ENCODE measurements at regions of chr2 and their contacts with region 1.

Region 1: GRCh38 chr2:144320491-144320890 is 199.4 kb downstream of the ZEB2 start:
- DNase-seq: peak; percentile 22
- H3K4me3 Mint-ChIP-seq: peak overlapping the region; percentile 51
- H3K27ac Mint-ChIP-seq: peak overlapping the region; percentile 78
- H3K4me1 Mint-ChIP-seq: peaks cover 62% of the 10 kb centered on the region
- H3K27me3 Mint-ChIP-seq: no peaks in the 10 kb centered on the region

Region 2: DNA sequence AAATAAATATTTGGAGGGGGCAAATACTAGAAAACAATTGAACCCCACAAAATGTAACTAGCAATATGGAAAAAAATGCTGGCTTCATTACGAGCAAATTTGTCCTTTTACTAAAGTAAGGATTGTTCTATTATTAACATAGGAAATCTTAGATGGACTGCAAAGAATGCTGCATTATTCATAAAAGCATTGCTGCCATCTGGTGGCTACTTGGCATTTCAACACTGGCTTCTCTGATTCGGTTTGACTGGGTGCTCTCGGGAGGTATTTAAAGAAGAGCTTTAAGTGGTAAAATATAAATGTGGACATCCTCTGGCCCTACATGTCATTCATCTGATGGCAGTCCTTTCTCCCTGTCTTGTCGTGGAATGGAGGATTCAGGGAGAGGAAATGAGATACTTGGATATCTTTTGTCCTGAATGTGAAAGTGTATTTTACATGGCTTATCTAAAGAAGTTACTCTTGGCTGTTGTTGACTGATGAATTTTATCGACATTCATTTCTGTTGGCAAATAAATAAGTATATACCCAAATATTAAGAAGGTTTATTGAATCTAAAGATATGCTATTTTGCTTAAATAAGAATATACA is 1061.0 kb before region 1 on chr2:
- intact Hi-C with region 1: loop called (anchors 10 kb)
- DNase-seq: peak; percentile 54
- H3K4me3 Mint-ChIP-seq: peak overlapping the region; percentile 63
- H3K27ac Mint-ChIP-seq: peak overlapping the region; percentile 92
- H3K4me1 Mint-ChIP-seq: peaks cover 73% of the 10 kb centered on the region
- H3K27me3 Mint-ChIP-seq: no peaks in the 10 kb centered on the region

Region 3: DNA sequence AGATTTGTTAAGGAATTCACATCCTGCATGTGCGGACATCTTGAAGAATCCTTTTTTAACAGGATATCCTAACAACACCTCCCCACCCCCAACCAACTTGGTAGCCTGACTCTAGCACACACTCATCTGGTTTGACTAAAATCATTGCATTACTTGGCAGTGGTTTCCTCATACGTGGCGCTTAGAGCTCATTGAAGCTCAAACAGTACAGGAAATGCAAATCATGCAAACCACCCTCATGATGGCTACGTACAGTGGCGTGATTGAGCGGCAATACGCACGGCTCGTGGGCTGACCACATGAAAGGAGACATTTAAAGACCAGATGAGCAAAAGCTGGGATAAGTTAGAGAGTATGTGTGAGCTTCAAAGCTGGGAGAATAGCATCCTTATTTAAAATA is 136.8 kb before region 1 on chr2:
- intact Hi-C with region 1: loop called (anchors 1 kb)
- DNase-seq: peak; percentile 76
- H3K4me3 Mint-ChIP-seq: peak overlapping the region; percentile 44
- H3K27ac Mint-ChIP-seq: peak overlapping the region; percentile 94
- H3K4me1 Mint-ChIP-seq: peaks cover 56% of the 10 kb centered on the region
- H3K27me3 Mint-ChIP-seq: no peaks in the 10 kb centered on the region

Region 4: DNA sequence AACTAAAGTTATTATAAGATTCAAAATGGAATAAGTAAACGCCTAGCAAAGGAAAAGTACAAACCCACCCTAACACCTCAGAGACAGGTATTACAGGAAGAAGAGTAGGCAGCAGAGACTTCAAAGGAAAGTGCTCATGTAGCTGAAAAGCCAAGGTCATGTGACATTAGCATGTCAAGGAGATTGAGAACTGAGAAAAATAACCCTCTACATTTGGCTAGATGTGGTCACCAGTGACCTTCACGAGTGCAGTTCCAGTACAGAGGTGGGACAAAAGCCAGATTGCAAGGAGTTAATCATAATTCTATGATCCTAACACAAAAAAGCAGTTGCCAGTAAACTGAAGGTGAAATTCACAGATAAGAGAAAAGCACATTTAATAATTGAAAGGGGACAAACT is 53.3 kb before region 1 on chr2:
- intact Hi-C with region 1: loop called (anchors 2 kb)
- DNase-seq: no peak
- H3K4me3 Mint-ChIP-seq: peak overlapping the region; percentile 26
- H3K27ac Mint-ChIP-seq: peak overlapping the region; percentile 84
- H3K4me1 Mint-ChIP-seq: peaks cover 38% of the 10 kb centered on the region
- H3K27me3 Mint-ChIP-seq: no peaks in the 10 kb centered on the region

Region 5: GRCh38 chr2:144310484-144310883 is 10.0 kb before region 1 on chr2:
- intact Hi-C with region 1: loop called (anchors 2 kb)
- DNase-seq: no peak
- H3K4me3 Mint-ChIP-seq: no peak overlapping the region
- H3K27ac Mint-ChIP-seq: peak overlapping the region; percentile 7
- H3K4me1 Mint-ChIP-seq: peaks cover 27% of the 10 kb centered on the region
- H3K27me3 Mint-ChIP-seq: no peaks in the 10 kb centered on the region

Region 6: DNA sequence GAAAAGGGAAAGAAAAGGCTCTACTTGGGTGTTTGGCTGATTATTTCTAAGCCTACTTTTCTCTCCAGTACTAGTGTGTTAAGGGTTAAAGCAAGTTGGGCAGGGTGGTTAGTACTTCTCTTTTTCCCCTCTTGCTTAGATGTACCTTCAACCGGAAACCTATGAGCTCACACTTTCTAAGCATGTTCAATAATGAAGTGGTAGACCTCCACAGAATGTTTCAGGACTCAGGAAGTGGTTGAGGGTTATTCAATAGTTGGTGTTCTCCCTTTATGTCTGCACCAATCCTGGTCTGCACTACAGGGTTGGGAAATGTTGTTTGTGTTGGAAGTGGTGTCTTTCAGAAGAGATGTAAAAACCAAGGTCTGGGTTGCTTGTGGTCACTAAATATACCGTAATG is 62.4 kb after region 1 on chr2:
- intact Hi-C with region 1: loop called (anchors 2 kb)
- DNase-seq: no peak
- H3K4me3 Mint-ChIP-seq: no peak overlapping the region
- H3K27ac Mint-ChIP-seq: peak overlapping the region; percentile 39
- H3K4me1 Mint-ChIP-seq: peaks cover 51% of the 10 kb centered on the region
- H3K27me3 Mint-ChIP-seq: peaks cover 2% of the 10 kb centered on the region

Region 7: GRCh38 chr2:144572977-144573376 is 252.5 kb after region 1 on chr2:
- intact Hi-C with region 1: loop called (anchors 5 kb)
- DNase-seq: no peak
- H3K4me3 Mint-ChIP-seq: no peak overlapping the region
- H3K27ac Mint-ChIP-seq: no peak overlapping the region
- H3K4me1 Mint-ChIP-seq: peaks cover 24% of the 10 kb centered on the region
- H3K27me3 Mint-ChIP-seq: peaks cover 21% of the 10 kb centered on the region

Measured in activated T-helper 2 cell treated with anti-CD3 and anti-CD28 coated beads, Interferon-gamma antibody, Interleukin-2, Interleukin-4, amounts not matched to agents 10 μg/mL and 5 μg/mL and 100 μg/mL, durations not matched to agents 14 hours and 24 hours and 36 hours (primary cell).